Mammary epithelial cell (primary cell): ENCODE measurements at regions of chr15 and their contacts with region 1.

Region 1: GRCh38 chr15:63752075-63752684 is 81.6 kb downstream of the HERC1 start:
- DNase-seq: peak; percentile 40
- H3K4me3 ChIP-seq: no peak overlapping the region
- H3K27ac ChIP-seq: no peak overlapping the region
- H3K4me1 ChIP-seq: no peaks in the 10 kb centered on the region
- H3K27me3 ChIP-seq: no peaks in the 10 kb centered on the region
- CTCF ChIP-seq: peak; percentile 80 to 83

Region 2: GRCh38 chr15:62515696-62516395 is 1236.3 kb before region 1 on chr15:
- CTCF ChIA-PET with region 1: no interaction called
- dilution Hi-C with region 1: no loop called
- in situ Hi-C with region 1: no loop called
- intact Hi-C with region 1: no loop called
- DNase-seq: no peak
- H3K4me3 ChIP-seq: no peak overlapping the region
- H3K27ac ChIP-seq: no peak overlapping the region
- H3K4me1 ChIP-seq: no peaks in the 10 kb centered on the region
- H3K27me3 ChIP-seq: no peaks in the 10 kb centered on the region
- CTCF ChIP-seq: no peak

Region 3: DNA sequence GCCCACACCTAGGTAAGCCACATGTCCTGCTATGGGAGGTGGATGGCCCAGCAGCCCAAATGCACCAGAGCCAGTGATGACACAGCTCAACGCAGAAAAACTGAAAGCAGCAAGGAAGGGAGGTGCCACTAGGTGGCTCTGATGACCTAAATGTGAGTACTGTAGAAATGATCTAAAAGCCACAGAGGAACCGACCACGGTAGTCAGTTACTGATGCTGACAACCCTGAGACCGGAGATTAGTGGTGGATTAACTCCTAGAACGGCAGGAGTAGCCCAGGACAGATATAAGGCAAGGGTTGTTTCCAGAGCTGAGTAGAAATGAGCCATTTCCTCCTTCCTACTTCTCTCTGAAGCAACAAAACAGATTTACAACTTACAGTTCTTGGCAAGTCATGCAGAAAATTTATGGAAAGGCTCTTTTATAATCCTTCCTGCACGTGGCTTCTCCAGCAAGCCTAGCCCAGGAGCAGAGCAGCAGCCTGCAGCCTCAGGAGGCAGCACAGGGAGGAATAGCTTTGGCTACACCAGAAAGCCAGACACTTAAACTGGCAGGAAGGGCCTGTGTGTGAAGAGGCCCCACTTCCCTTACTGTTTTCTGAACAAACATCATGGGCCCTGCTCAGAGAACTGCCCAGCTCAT is 141.9 kb before region 1 on chr15:
- CTCF ChIA-PET with region 1: interaction called, 5 read pairs
- dilution Hi-C with region 1: no loop called
- in situ Hi-C with region 1: no loop called
- intact Hi-C with region 1: loop called (anchors 2 kb)
- DNase-seq: peak; percentile 67
- H3K4me3 ChIP-seq: no peak overlapping the region
- H3K27ac ChIP-seq: no peak overlapping the region
- H3K4me1 ChIP-seq: peaks cover under 1% of the 10 kb centered on the region
- H3K27me3 ChIP-seq: no peaks in the 10 kb centered on the region
- CTCF ChIP-seq: peak; percentile 81 to 85

Region 4: DNA sequence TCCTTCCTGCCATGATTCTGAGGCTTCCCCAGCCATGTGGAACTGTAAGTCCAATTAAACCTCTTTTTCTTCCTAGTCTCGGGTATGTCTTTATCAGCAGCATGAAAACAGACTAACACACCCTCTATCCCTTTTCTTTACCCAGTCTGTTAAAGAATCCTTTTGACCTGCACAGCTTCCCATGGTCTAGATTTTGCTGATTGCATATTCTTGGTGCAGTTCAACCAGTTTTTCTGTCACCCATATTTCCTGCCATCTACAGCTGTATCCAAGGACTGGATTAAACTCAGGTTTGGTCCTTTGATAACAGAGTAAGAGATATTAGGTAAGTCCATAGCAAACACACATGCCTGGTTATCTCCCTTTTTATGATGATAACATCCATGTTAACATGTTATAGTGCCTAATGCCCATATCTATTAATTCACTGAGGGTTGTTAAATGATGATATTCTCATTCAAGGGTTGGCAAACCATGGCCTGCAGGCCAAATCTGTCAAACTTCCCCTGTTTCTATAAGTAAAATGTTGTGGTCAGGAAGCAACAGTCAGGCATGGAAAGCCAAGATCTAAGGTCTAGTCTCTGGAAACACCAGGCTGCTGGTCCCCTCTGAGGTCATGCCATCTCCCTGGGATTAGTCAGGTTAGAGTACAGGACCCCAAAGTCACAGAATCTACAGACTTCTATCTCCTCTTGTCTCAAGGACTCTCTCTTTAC is 96.5 kb after region 1 on chr15:
- CTCF ChIA-PET with region 1: interaction called, 10 read pairs
- dilution Hi-C with region 1: no loop called
- in situ Hi-C with region 1: no loop called
- intact Hi-C with region 1: no loop called
- DNase-seq: no peak
- H3K4me3 ChIP-seq: no peak overlapping the region
- H3K27ac ChIP-seq: no peak overlapping the region
- H3K4me1 ChIP-seq: no peaks in the 10 kb centered on the region
- H3K27me3 ChIP-seq: no peaks in the 10 kb centered on the region
- CTCF ChIP-seq: no peak

Region 5: DNA sequence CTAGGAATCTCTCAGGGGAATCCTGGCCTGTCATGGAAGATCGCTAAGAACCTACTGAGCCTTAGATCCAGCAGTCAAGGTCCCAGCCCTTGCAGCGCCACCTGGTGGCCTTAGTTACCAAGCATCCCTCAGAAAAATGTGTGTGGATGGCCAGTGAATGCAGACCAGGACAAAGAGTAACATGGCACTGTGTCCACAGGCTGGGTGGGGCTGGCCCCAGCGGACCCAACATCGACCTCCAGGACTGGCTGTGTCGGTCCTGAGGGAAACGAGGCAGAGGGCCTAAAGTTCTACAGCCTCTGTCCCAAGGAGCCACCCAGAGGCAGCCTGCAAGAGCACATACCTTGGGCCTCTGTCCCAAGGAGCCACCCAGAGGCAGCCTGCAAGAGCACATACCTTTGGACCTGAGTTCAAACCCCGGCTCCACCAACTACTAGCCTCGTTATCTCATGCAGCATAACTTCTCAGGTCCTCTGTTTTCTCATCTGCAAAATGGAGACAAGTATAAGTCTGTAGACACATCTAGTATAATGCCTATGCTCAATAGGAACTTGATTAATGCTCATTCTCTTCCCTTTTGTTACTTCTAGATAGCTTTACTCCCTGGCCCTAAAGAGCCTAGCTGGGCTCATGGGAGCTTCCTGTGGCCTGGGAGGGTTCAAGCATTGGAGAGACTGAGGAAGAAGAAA is 139.0 kb after region 1 on chr15:
- CTCF ChIA-PET with region 1: no interaction called
- dilution Hi-C with region 1: no loop called
- in situ Hi-C with region 1: loop called in 1 of 2 experiments (anchors 10 kb)
- intact Hi-C with region 1: loop called (anchors 1 kb)
- DNase-seq: peak; percentile 60
- H3K4me3 ChIP-seq: no peak overlapping the region
- H3K27ac ChIP-seq: no peak overlapping the region
- H3K4me1 ChIP-seq: peaks cover 2% of the 10 kb centered on the region
- H3K27me3 ChIP-seq: no peaks in the 10 kb centered on the region
- CTCF ChIP-seq: peak; percentile 74 to 86

Region 6: DNA sequence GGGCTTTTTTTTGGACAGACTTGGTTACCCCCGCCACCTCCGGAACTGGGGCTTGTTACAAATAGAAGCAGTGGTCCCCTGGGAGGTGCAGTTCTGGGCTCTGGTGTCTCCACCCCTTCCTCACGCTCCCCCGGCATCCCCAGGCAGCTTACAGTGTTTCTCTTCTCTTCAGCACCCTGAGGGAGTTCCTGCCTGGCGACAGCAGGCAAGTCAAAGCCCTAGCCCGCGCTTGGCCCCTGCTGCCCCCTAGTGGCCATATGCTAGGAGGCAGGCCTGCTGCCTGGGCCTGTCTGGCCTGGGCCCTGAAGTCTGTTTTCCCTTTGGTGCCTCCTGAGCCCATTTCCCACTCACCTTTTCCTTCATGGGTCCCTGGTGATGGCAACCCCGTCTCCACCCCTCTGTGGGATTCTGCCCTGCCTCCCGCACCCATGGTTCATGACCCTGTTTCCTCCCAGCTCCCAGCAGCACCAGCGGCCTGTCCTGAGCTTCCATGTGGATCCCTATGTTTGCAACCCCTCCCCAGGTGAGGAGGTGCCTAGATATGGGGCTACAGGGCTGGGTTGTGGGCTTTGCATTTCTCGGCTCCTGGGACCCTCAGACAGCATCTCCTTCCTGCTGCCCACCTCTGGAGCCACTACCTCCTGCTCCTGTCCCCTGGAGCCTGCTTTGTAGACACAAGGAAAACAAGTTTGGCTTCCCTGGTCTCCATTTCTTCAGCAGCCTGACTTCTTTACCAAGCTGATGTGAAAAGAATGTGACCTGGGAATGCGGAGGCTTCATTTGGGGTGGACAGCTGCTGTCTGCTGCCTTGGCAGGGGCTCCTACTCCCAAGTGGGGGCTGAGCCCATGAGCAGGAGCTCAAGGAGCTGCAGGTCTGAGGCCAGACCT is 401.5 kb after region 1 on chr15:
- CTCF ChIA-PET with region 1: no interaction called
- dilution Hi-C with region 1: no loop called
- in situ Hi-C with region 1: no loop called
- intact Hi-C with region 1: loop called (anchors 5 kb)
- DNase-seq: peak; percentile 72
- H3K4me3 ChIP-seq: no peak overlapping the region
- H3K27ac ChIP-seq: no peak overlapping the region
- H3K4me1 ChIP-seq: peaks cover 15% of the 10 kb centered on the region
- H3K27me3 ChIP-seq: peaks cover 4% of the 10 kb centered on the region
- CTCF ChIP-seq: peak; percentile 99